ENCODE measurements at regions of chr1 and their contacts with region 1.

Region 1: GRCh38 chr1:199033661-199034060 is 394.8 kb downstream of the PTPRC start:
- DNase-seq: no peak
- H3K4me3 ChIP-seq: no peak overlapping the region
- H3K27ac ChIP-seq: no peak overlapping the region
- H3K4me1 ChIP-seq: no peaks in the 10 kb centered on the region
- H3K27me3 ChIP-seq: no peaks in the 10 kb centered on the region
- CTCF ChIP-seq: no peak
- POLR2A ChIP-seq: no peak

Region 2: GRCh38 chr1:198858033-198858432 is 175.6 kb before region 1 on chr1:
- CTCF ChIA-PET with region 1: no interaction called
- POLR2A ChIA-PET with region 1: no interaction called
- dilution Hi-C with region 1: no loop called
- intact Hi-C with region 1: no loop called
- DNase-seq: no peak
- H3K4me3 ChIP-seq: no peak overlapping the region
- H3K27ac ChIP-seq: no peak overlapping the region
- H3K4me1 ChIP-seq: no peaks in the 10 kb centered on the region
- H3K27me3 ChIP-seq: no peaks in the 10 kb centered on the region
- CTCF ChIP-seq: no peak
- POLR2A ChIP-seq: no peak

Region 3: GRCh38 chr1:199007423-199007822 is 26.2 kb before region 1 on chr1:
- CTCF ChIA-PET with region 1: no interaction called
- POLR2A ChIA-PET with region 1: no interaction called
- dilution Hi-C with region 1: no loop called
- intact Hi-C with region 1: no loop called
- DNase-seq: no peak
- H3K4me3 ChIP-seq: no peak overlapping the region
- H3K27ac ChIP-seq: no peak overlapping the region
- H3K4me1 ChIP-seq: no peaks in the 10 kb centered on the region
- H3K27me3 ChIP-seq: no peaks in the 10 kb centered on the region
- CTCF ChIP-seq: no peak
- POLR2A ChIP-seq: no peak

Region 4: DNA sequence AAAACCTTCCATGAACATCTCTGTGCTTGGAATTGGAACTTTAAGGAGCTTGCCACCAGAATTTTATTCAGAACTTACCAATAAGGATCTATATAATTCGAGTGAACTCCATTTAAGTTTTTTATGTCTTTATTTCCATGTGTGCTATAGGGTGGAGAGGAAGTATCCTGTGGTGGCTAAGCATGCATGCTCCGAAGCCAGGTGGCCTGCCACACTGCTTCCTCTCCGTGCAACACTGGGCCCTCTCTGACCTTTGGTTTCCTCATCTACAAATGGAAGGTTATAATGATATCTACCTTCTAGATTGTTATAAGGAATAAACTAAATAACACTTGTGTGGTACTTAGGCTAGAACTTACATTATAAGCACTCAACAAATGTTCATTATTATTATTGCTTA is 12.8 kb before region 1 on chr1:
- CTCF ChIA-PET with region 1: no interaction called
- POLR2A ChIA-PET with region 1: no interaction called
- dilution Hi-C with region 1: no loop called
- intact Hi-C with region 1: loop called (anchors 2 kb)
- DNase-seq: peak; percentile 6
- H3K4me3 ChIP-seq: no peak overlapping the region
- H3K27ac ChIP-seq: no peak overlapping the region
- H3K4me1 ChIP-seq: no peaks in the 10 kb centered on the region
- H3K27me3 ChIP-seq: no peaks in the 10 kb centered on the region
- CTCF ChIP-seq: no peak
- POLR2A ChIP-seq: no peak

Region 5: DNA sequence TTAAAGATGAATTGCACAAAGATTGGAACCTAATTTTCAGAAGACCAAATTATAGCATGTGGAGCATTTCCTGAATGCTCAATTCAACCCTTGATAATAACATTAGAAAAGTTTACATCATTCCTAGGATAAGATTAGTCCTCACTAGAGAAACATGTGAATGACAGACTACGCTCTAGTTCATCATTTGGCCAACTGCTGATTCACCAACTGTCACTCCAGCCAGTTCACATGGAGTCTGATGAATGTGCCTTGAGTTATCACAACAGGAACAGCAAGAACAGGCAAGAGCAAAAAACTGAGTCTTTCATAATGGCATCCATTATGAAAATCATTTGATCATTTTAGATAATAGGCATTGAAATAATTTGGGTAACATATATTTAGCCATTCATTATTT is 21.0 kb after region 1 on chr1:
- CTCF ChIA-PET with region 1: no interaction called
- POLR2A ChIA-PET with region 1: no interaction called
- dilution Hi-C with region 1: no loop called
- intact Hi-C with region 1: no loop called
- DNase-seq: no peak
- H3K4me3 ChIP-seq: no peak overlapping the region
- H3K27ac ChIP-seq: no peak overlapping the region
- H3K4me1 ChIP-seq: no peaks in the 10 kb centered on the region
- H3K27me3 ChIP-seq: no peaks in the 10 kb centered on the region
- CTCF ChIP-seq: no peak
- POLR2A ChIP-seq: no peak